Left cardiac atrium (tissue), 4 donors: ENCODE measurements at regions of chr1 and their contacts with region 1.

Region 1: DNA sequence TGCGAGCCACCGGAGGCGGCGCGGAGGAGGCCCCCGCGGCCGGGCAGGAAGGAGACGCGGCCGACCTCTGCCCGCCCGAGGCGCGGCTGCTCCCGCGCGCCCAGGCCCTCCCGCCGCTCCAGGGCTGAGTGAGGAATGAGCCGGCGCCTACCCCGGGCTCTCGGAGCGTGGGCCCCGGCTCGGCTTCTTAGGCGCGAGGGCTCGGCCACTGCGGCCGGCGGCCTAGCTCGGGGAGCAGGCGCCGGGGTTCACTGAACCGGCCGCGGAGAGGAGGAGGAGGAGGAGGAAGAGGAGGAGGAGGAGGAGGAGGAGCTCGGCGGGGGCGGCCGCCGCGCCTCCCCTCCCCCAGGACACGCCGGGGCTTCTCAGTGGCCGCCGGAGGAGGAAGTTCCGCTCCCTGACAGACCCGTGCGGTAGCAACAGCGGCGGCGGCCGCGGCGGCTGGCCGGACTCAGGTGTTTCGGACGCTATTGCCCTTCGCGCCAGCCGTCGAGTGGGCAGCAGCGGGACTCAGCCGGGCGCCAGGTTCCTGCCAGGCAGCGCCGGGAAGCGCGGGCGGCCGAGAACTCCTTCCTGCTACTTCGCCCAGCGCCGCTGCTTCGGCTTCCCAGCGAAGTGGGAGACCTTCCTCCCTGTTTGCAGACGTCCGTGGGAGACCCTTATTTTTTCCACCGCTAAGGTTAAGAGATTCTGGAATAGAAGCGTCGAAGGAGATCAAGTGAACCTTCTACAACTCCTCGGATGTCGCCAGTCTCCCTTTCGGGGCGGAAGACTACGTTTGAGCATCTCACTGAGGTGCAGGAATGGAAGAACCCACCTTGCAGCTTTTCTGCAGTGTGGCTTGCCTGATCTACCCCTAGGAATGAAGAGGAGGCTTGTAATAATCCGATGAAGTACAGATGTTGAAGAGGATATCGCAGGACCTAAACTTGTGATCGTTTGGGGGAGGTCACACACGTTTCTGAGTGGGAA is at the start of gene MAN1A2:
- DNase-seq: peak; percentile 91
- ATAC-seq: peak; percentile 91 to 95
- total RNA-seq, gene MAN1A2: 36.3 TPM

Region 2: DNA sequence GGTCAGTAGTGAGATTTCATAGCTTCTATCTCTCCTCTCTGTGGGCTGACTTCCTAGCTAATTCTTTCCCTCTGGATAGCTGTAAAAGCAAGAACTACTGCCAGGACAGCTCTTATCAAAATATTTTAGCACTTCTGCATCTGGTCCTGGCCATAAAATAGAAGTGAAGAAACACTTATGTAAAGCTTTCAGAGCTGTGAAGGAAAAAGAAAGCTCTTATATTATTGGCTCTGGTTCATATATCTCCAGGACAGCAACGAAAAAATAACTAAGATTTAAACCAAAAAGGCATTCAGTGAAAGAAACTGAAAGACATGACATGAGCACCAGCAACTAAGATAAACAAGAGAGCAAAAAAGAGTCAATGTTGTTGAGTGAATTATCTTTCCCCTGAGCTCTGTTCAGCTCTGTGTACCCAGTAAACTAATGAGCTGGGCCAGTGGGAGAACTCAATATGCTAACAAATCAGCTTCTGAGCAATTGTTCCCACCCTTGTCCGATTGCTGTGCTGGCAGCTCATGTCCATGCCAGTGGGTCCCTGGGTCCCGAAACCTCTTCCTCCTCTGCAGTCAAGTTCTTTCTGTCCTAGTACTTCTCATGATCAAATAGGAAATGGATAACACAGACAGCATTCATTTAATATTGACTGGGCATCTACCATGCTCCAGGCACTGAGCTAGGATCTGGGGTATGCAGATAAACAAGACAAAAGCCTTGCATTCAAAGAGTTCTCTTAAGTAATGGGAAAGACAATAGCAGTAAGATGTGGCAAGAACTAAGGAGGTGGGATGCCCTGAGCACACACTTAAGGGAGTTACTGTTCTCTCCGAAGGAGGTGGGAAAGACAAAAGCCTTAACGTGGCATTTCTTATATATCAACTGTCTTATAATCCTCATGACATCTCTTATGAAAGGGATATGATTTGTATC is 45.4 kb before region 1 on chr1:
- intact Hi-C with region 1: loop called in 1 of 2 experiments (anchors 5 kb)
- DNase-seq: no peak
- ATAC-seq: peak; percentile 85 to 88